PC-3 (cell line): ENCODE measurements at regions of chr5 and their contacts with region 1.

Region 1: DNA sequence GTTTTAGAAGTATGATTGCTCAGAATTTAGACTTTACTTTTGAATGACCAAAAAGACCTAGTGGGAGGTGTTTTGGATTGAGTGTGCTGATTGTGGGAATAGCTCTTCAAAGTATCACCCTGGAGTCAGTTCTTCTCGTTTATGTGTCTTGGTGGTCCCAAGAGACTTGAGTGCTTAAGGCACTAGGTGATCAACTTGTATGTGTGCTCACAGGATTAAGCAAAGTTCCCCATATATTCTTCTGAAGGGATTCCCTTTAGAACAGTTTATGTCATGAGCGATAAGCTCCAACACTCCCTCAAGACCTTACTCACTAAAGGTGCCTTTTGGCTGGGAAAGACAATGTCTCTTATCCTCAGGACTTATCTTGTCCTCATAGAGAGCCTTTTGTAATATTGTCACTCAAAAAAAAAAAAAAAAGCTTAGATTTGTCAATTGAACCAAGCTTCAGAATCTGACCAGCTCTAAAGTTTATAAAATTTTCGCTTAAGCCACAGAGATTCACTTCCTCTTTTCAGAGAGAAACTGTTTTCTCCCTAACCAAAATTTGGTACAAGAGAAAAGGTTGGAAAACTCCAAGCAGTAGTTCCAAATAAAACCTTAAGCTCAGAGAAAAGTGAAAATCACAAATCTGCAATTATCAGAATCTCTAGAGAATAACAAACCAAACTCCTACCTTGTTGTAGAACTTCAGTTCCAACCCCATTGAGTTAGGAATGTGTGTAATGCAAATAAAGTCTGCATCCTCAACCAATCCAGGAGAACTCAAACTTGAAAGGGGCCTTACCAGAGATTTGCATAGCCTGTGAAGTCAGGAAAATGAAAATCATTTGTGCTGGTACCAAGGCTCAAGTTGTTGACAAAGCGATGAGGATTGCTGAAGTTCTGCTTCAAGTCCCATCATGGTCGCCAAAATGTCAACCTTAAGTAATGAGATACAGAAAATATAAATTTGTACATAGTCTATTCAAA is 40.0 kb upstream of the PDZD2 start:
- DNase-seq: no peak
- ATAC-seq: no peak
- H3K4me3 ChIP-seq: no peak overlapping the region
- H3K27ac ChIP-seq: no peak overlapping the region
- H3K4me1 ChIP-seq: no peaks in the 10 kb centered on the region
- H3K27me3 ChIP-seq: peaks cover 85% of the 10 kb centered on the region
- CTCF ChIP-seq: no peak

Region 2: DNA sequence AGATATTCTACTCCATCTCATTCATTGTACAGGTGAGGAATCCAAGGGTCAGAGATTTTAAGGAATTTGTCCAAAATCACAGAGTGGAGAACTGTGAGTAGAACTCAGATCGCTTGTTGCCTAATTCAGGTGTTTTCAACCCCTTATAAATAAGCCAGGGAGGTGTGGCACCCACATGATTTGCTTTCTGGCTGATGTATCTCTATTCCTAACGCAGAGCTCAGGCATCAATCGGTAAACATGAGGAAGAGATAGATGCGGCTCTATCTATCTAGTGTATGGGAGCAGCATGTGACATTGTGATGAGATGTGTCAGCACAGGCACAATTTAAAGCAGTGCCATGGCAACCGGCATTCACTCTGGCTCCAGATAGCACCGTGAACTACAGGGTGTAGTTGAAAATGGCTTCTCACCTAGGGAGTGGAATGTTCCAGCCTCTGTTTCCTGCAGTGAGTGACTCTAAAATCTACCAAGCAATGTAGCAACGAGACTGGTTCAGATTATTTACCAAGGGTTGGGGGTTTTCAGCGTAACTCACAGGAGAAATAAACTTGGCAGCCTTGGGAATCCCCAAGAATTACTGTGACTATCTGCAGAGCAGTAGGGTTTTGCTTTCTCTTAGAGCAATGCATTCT is 933.1 kb after region 1 on chr5:
- CTCF ChIA-PET with region 1: no interaction called
- POLR2A ChIA-PET with region 1: interaction called, 17 read pairs
- intact Hi-C with region 1: no loop called
- DNase-seq: peak; percentile 57
- ATAC-seq: peak; percentile 97
- H3K4me3 ChIP-seq: peak overlapping the region; percentile 17; the same call in 1 of the 2 replicates
- H3K27ac ChIP-seq: no peak overlapping the region
- H3K4me1 ChIP-seq: peaks cover 14% of the 10 kb centered on the region
- H3K27me3 ChIP-seq: no peaks in the 10 kb centered on the region
- CTCF ChIP-seq: no peak